ENCODE measurements at regions of chr11 and their contacts with region 1.

Region 1: GRCh38 chr11:125371431-125371935 is 124.6 kb downstream of the FEZ1 start:
- DNase-seq: peak; percentile 86
- ATAC-seq: peak; percentile 88
- H3K4me3 Mint-ChIP-seq: peak overlapping the region; percentile 64
- H3K27ac Mint-ChIP-seq: peak overlapping the region; percentile 97
- H3K4me1 Mint-ChIP-seq: peaks cover 58% of the 10 kb centered on the region
- H3K27me3 Mint-ChIP-seq: peaks cover 5% of the 10 kb centered on the region
- CTCF ChIP-seq: no peak

Region 2: DNA sequence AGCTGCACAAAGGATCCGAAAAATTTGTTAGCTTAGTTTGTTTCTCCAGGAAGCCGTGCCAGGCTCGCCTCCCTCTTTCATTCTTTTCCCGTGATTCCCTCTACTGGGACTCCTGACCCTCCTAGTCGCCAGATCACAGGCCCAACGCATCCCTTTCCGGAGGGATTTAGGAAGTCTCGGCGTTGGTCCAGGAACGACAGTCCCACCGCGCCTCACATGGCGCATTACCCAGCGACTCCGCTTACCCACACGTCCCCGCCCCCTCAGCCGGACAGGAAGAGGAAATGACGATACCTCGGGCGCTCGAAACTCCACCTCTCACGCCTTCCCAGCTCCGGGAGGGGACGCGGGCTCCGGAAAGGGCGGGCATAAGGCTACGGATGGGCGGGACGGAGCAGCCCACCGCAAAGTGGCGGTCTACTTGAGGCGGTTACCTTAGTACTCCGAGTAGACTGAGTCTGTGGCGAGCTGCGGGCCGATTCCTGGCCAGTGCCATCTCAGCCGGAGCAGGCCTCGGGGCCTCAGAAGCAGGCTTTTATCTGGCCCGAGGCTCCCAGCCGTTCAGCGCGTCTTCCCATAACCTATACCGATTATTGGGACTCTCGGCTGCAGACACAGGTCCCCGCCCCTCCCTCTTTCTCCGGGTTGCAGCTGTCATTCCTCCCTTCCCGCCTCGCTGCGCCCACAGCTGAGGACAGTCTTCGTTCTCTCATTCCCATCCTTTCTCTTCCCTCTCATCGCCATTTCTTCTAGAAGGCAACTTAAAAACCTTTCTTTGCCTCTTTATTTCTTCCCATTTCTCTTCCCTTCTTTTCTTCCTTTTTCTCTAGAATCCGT is 417.5 kb before region 1 on chr11 and contains the start of gene CCDC15:
- CTCF ChIA-PET with region 1: no interaction called
- POLR2A ChIA-PET with region 1: no interaction called
- DNase-seq: peak; percentile 98
- ATAC-seq: peak; percentile 99
- H3K4me3 Mint-ChIP-seq: no peak within 1 kb of the TSS
- H3K27ac Mint-ChIP-seq: no peak within 1 kb of the TSS
- H3K4me1 Mint-ChIP-seq: no peaks in the 10 kb centered on the region
- H3K27me3 Mint-ChIP-seq: no peaks in the 10 kb centered on the region; the same call in 1 of the 2 replicates
- CTCF ChIP-seq: no peak
- total RNA-seq, gene CCDC15: 2.1 to 2.6 TPM (median 2.4 TPM) in 3 replicates

Region 3: GRCh38 chr11:125132596-125132995 is 238.9 kb before region 1 on chr11:
- CTCF ChIA-PET with region 1: no interaction called
- POLR2A ChIA-PET with region 1: no interaction called
- DNase-seq: no peak
- ATAC-seq: no peak
- H3K4me3 Mint-ChIP-seq: no peak overlapping the region
- H3K27ac Mint-ChIP-seq: no peak overlapping the region
- H3K4me1 Mint-ChIP-seq: peaks cover 6% of the 10 kb centered on the region
- H3K27me3 Mint-ChIP-seq: peaks cover 42% of the 10 kb centered on the region
- CTCF ChIP-seq: no peak

Region 4: DNA sequence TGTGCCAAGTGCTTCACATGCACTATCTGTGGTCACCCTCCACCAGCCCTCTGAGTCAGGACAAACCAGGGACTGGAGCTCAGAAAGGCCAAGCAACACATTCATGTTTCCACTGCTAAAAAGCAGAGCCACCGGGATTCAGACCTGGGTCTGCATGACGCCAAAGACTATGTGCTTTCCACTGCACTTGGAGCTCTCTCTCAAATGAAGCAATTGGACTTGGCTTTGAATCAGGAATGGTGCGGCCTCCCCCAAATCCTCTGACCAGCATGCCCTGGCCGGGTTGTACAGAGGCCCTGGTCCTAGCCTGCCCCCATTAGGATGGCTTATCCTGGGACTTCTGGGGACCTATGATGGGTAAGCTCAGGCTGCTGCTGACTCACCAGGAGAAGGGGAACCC is 126.2 kb before region 1 on chr11:
- CTCF ChIA-PET with region 1: no interaction called
- POLR2A ChIA-PET with region 1: no interaction called
- DNase-seq: no peak
- ATAC-seq: no peak
- H3K4me3 Mint-ChIP-seq: no peak overlapping the region
- H3K27ac Mint-ChIP-seq: no peak overlapping the region
- H3K4me1 Mint-ChIP-seq: peaks cover 18% of the 10 kb centered on the region
- H3K27me3 Mint-ChIP-seq: no peaks in the 10 kb centered on the region; the same call in 1 of the 2 replicates
- CTCF ChIP-seq: no peak

Region 5: DNA sequence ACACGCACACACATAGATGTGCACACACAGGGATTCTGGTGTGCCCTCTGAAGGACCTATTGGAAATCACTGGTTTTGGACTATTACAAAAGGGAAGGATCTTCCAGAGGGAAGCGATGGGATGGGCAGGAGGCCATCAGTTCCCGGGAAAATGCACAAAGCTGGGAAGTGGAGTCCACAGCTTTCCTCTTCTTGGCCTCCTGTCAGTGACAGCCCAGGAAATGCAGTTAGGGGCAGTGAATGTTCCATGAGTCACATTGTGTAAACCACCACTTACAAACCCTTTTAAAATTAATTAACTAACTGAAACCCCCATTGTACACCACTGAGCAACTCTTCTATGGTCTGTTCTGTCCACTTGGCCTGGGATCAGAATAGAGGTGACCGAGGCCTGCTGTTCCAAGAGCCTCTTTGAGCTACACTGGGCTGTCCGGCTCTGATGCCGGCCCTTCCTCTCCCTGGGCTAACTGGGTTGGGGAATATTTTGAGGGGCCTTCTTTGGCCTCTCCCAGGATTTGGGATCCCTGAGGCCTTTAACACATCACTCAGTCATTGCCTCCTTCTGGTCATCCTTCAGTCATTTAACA is 13.1 kb before region 1 on chr11:
- CTCF ChIA-PET with region 1: interaction called, 14 read pairs
- POLR2A ChIA-PET with region 1: interaction called, 5 read pairs
- DNase-seq: no peak
- ATAC-seq: no peak
- H3K4me3 Mint-ChIP-seq: no peak overlapping the region
- H3K27ac Mint-ChIP-seq: no peak overlapping the region
- H3K4me1 Mint-ChIP-seq: no peaks in the 10 kb centered on the region; the same call in 1 of the 2 replicates
- H3K27me3 Mint-ChIP-seq: no peaks in the 10 kb centered on the region; the same call in 1 of the 2 replicates
- CTCF ChIP-seq: no peak

Region 6: DNA sequence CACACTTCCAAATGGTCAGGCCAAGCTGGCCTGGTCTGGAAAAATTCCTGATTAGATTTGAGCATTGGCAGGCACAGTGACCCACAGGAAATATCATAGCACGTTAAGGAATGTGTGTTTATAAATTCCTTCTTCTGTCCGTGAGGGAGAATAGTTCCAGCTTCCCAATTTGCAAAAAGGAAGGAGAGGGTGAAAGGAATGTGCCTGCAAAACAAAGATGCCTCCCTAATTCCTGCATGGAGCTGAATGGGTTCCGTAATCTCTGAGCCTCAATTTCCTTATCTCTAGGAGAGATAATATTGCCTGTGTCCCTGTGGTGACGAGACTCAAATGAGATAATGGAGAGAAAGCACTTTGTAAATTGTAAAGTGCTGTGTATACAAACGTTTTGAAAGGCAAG is 19.5 kb after region 1 on chr11:
- CTCF ChIA-PET with region 1: no interaction called
- POLR2A ChIA-PET with region 1: no interaction called
- DNase-seq: no peak
- ATAC-seq: peak; percentile 43; the same call in 1 of the 2 replicates
- H3K4me3 Mint-ChIP-seq: no peak overlapping the region
- H3K27ac Mint-ChIP-seq: peak overlapping the region; percentile 34
- H3K4me1 Mint-ChIP-seq: peaks cover 33% of the 10 kb centered on the region
- H3K27me3 Mint-ChIP-seq: no peaks in the 10 kb centered on the region
- CTCF ChIP-seq: no peak

Measured in WTC11 (cell line).